ENCODE measurements at regions of chr10 and their contacts with region 1.

Region 1: GRCh38 chr10:31808258-31809218 is 120.1 kb downstream of the ARHGAP12 start:
- DNase-seq: no peak
- H3K4me3 ChIP-seq: peak overlapping the region in 2 of 8 donors; percentile 14 to 43
- H3K27ac ChIP-seq: peak overlapping the region in 7 of 8 donors; percentile 62 to 71 (median 65)
- H3K4me1 ChIP-seq: peaks cover 0 to 17% (median 8%) of the 10 kb centered on the region in 6 donors
- H3K27me3 ChIP-seq: no peaks in the 10 kb centered on the region
- CTCF ChIP-seq: peak in 10 of 11 experiments; percentile 34 to 65 (median 58)
- POLR2A ChIP-seq: no peak

Region 2: GRCh38 chr10:30751678-30752331 is 1056.7 kb before region 1 on chr10:
- intact Hi-C with region 1: loop called (anchors 10 kb)
- DNase-seq: peak; percentile 93
- H3K4me3 ChIP-seq: no peak overlapping the region
- H3K27ac ChIP-seq: no peak overlapping the region
- H3K4me1 ChIP-seq: peaks cover 0 to 11% (median 2%) of the 10 kb centered on the region in 6 donors
- H3K27me3 ChIP-seq: no peaks in the 10 kb centered on the region
- CTCF ChIP-seq: peak in 5 of 11 experiments; percentile 72 to 94 (median 89)
- POLR2A ChIP-seq: no peak

Measured in spleen (tissue), 13 donors.